ENCODE measurements at regions of chr3 and their contacts with region 1.

Region 1: GRCh38 chr3:15629860-15630597 is 28.5 kb downstream of the BTD start:
- DNase-seq: peak; percentile 69 to 88 (median 81)
- H3K4me3 ChIP-seq: peak overlapping the region in 1 of 3 experiments; percentile 23
- H3K4me3 Mint-ChIP-seq: peak overlapping the region in 1 of 2 donors; percentile 36
- H3K27ac ChIP-seq: no peak overlapping the region
- H3K27ac Mint-ChIP-seq: no peak overlapping the region
- H3K4me1 ChIP-seq: peaks cover 5 to 7% of the 10 kb centered on the region in 2 donors
- H3K4me1 Mint-ChIP-seq: peaks cover 8% of the 10 kb centered on the region
- H3K27me3 ChIP-seq: no peaks in the 10 kb centered on the region
- H3K27me3 Mint-ChIP-seq: peaks cover 2% of the 10 kb centered on the region in 3 donors
- CTCF ChIP-seq: peak; percentile 80

Region 2: GRCh38 chr3:15591242-15591641 is 38.8 kb before region 1 on chr3:
- intact Hi-C with region 1: no loop called
- DNase-seq: no peak
- H3K4me3 ChIP-seq: no peak overlapping the region
- H3K4me3 Mint-ChIP-seq: no peak overlapping the region
- H3K27ac ChIP-seq: no peak overlapping the region
- H3K27ac Mint-ChIP-seq: peak overlapping the region in 1 of 7 donors; percentile 38
- H3K4me1 ChIP-seq: no peaks in the 10 kb centered on the region
- H3K4me1 Mint-ChIP-seq: no peaks in the 10 kb centered on the region
- H3K27me3 ChIP-seq: no peaks in the 10 kb centered on the region
- H3K27me3 Mint-ChIP-seq: no peaks in the 10 kb centered on the region
- CTCF ChIP-seq: no peak

Region 3: GRCh38 chr3:15682561-15683185 is 52.6 kb after region 1 on chr3:
- intact Hi-C with region 1: loop called in 1 of 2 experiments (anchors 10 kb)
- DNase-seq: peak; percentile 23 to 58 (median 39)
- H3K4me3 ChIP-seq: peak overlapping the region in 1 of 3 experiments; percentile 46
- H3K4me3 Mint-ChIP-seq: peak overlapping the region in 1 of 2 donors; percentile 70
- H3K27ac ChIP-seq: peak overlapping the region in 1 of 2 donors; percentile 62
- H3K27ac Mint-ChIP-seq: peak overlapping the region; percentile 68 to 86 (median 79)
- H3K4me1 ChIP-seq: peaks cover 36 to 45% of the 10 kb centered on the region in 2 donors
- H3K4me1 Mint-ChIP-seq: peaks cover 41% of the 10 kb centered on the region
- H3K27me3 ChIP-seq: no peaks in the 10 kb centered on the region
- H3K27me3 Mint-ChIP-seq: no peaks in the 10 kb centered on the region
- CTCF ChIP-seq: no peak

Region 4: GRCh38 chr3:15812183-15812582 is 182.2 kb after region 1 on chr3:
- intact Hi-C with region 1: loop called (anchors 2 to 5 kb)
- DNase-seq: peak in 2 of 3 donors; percentile 37 to 63
- H3K4me3 ChIP-seq: no peak overlapping the region
- H3K4me3 Mint-ChIP-seq: peak overlapping the region in 1 of 2 donors; percentile 33
- H3K27ac ChIP-seq: no peak overlapping the region
- H3K27ac Mint-ChIP-seq: peak overlapping the region in 3 of 7 donors; percentile 18 to 80 (median 70)
- H3K4me1 ChIP-seq: peaks cover 4 to 6% of the 10 kb centered on the region in 2 donors
- H3K4me1 Mint-ChIP-seq: peaks cover 12% of the 10 kb centered on the region
- H3K27me3 ChIP-seq: no peaks in the 10 kb centered on the region
- H3K27me3 Mint-ChIP-seq: peaks cover 0 to 3% (median 0%) of the 10 kb centered on the region in 3 donors
- CTCF ChIP-seq: peak; percentile 75

Region 5: DNA sequence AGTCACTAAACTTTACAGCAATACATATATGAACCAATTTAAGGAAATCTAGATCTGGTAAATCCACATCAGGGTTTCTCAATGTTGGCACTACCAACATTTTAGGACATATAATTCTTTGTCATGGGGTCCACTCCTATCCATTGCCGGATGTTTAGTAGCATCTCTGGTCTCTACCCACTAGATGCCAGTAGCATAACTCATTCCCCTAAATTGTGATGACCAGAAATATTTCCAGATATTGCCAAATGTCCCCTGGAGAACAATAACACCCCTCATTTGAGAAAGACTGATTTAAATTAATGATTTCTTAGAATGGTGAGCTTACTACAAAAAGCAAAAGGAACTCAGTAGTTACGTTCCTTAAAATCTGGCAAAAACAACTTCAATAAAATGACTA is 190.9 kb after region 1 on chr3:
- intact Hi-C with region 1: loop called in 1 of 2 experiments (anchors 5 kb)
- DNase-seq: no peak
- H3K4me3 ChIP-seq: no peak overlapping the region
- H3K4me3 Mint-ChIP-seq: no peak overlapping the region
- H3K27ac ChIP-seq: no peak overlapping the region
- H3K27ac Mint-ChIP-seq: no peak overlapping the region
- H3K4me1 ChIP-seq: no peaks in the 10 kb centered on the region
- H3K4me1 Mint-ChIP-seq: peaks cover 5% of the 10 kb centered on the region
- H3K27me3 ChIP-seq: no peaks in the 10 kb centered on the region
- H3K27me3 Mint-ChIP-seq: no peaks in the 10 kb centered on the region
- CTCF ChIP-seq: no peak

Measured in CD14-positive monocyte (primary cell).